MCF 10A (cell line): ENCODE measurements at regions of chr13 and their contacts with region 1.

Region 1: GRCh38 chr13:75694722-75695121 is 58.6 kb downstream of the LMO7 start:
- DNase-seq: peak; percentile 82
- H3K4me3 Mint-ChIP-seq: no peak overlapping the region
- H3K27ac Mint-ChIP-seq: peak overlapping the region; percentile 27
- H3K4me1 Mint-ChIP-seq: peaks cover 18% of the 10 kb centered on the region
- H3K27me3 Mint-ChIP-seq: no peaks in the 10 kb centered on the region
- CTCF ChIP-seq: no peak

Region 2: DNA sequence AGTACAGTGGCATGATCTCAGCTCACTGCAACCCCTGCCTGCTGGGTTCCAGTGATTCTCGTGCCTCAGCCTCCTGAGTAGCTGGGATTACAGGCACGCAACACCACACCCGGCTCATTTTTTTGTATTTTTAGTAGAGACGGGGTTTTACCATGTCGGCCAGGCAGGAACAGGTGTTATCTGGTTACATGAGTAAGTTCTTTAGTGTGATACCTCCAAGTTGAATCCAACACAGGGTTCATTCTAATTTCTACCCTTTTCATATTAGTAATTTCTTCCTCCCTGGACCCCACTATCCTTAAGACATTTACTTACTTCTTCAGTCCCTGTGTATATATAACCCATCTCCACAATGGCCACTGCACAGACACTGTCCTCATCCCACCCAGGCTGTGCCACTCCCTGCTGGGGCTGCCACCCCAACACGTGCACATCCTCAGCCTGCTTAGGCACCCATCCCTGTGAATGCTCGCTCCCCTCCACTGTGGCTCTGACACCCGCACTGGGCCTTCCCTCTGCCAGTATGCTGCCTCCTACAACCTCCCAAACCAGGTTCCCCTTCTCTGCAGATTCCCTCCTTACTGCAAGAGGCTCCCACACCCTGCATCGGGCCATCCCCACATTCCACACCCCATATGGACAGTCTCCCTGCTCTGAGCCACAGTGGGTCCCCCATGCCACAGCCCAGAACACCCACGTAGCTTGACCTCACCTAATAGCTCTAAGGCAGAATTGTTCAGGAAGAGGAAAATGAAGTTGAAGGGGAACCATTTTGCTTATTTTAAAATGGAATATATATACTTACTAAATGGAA is 359.9 kb before region 1 on chr13:
- CTCF ChIA-PET with region 1: no interaction called
- POLR2A ChIA-PET with region 1: no interaction called
- intact Hi-C with region 1: no loop called
- DNase-seq: no peak
- H3K4me3 Mint-ChIP-seq: no peak overlapping the region
- H3K27ac Mint-ChIP-seq: no peak overlapping the region
- H3K4me1 Mint-ChIP-seq: peaks cover 9% of the 10 kb centered on the region
- H3K27me3 Mint-ChIP-seq: no peaks in the 10 kb centered on the region
- CTCF ChIP-seq: no peak

Region 3: DNA sequence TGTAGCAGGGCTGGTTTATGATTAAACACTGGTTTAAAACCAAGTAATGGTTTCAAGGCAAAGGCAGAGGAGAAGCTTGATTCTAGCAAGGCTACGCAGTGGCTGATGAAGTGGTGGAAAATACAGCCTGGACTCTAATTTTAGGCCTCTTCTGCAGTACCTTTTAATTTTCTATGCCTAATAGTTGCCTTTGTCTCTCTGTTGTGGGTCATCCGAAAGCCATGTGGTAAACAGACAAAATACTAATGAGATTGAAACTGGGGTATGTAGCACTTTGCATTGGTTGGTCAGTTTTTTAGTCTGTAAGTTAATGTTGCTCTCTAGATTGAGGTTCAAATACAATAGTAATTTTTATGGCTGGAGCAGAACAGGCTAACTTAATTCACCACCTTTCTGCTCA is 55.3 kb before region 1 on chr13:
- CTCF ChIA-PET with region 1: no interaction called
- POLR2A ChIA-PET with region 1: no interaction called
- intact Hi-C with region 1: no loop called
- DNase-seq: no peak
- H3K4me3 Mint-ChIP-seq: no peak overlapping the region
- H3K27ac Mint-ChIP-seq: no peak overlapping the region
- H3K4me1 Mint-ChIP-seq: no peaks in the 10 kb centered on the region
- H3K27me3 Mint-ChIP-seq: no peaks in the 10 kb centered on the region
- CTCF ChIP-seq: no peak

Region 4: GRCh38 chr13:75715601-75716523 is 21.1 kb after region 1 on chr13:
- CTCF ChIA-PET with region 1: interaction called, 31 read pairs
- POLR2A ChIA-PET with region 1: interaction called, 16 read pairs
- intact Hi-C with region 1: no loop called
- DNase-seq: peak; percentile 71
- H3K4me3 Mint-ChIP-seq: no peak overlapping the region
- H3K27ac Mint-ChIP-seq: peak overlapping the region; percentile 91
- H3K4me1 Mint-ChIP-seq: peaks cover 9% of the 10 kb centered on the region
- H3K27me3 Mint-ChIP-seq: no peaks in the 10 kb centered on the region
- CTCF ChIP-seq: no peak

Region 5: GRCh38 chr13:75771818-75772217 is 77.1 kb after region 1 on chr13:
- CTCF ChIA-PET with region 1: interaction called, 93 read pairs
- POLR2A ChIA-PET with region 1: interaction called, 4 read pairs
- intact Hi-C with region 1: no loop called
- DNase-seq: peak; percentile 65
- H3K4me3 Mint-ChIP-seq: no peak overlapping the region
- H3K27ac Mint-ChIP-seq: peak overlapping the region; percentile 71
- H3K4me1 Mint-ChIP-seq: peaks cover 20% of the 10 kb centered on the region
- H3K27me3 Mint-ChIP-seq: no peaks in the 10 kb centered on the region
- CTCF ChIP-seq: no peak

Region 6: DNA sequence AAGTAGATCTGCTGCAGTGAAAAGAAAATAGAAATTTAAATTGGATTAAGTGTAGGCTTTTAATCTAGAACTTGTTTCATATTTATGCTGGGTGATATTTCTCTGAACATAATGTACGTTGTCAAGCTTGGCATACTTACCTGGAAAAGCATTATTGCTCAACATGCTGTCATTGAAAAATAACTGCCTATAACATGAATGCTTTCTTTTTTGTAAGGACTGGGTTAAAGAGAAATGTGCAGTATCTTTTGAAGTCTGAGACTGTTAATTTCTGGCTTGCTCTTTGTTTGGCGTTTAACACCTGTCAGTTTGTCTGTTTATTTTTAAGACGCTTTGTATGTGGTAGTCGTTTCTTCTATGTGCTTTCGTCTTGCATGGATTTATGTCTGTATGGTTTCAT is 116.6 kb after region 1 on chr13:
- CTCF ChIA-PET with region 1: interaction called, 75 read pairs
- POLR2A ChIA-PET with region 1: interaction called, 3 read pairs
- intact Hi-C with region 1: no loop called
- DNase-seq: no peak
- H3K4me3 Mint-ChIP-seq: no peak overlapping the region
- H3K27ac Mint-ChIP-seq: no peak overlapping the region
- H3K4me1 Mint-ChIP-seq: peaks cover 11% of the 10 kb centered on the region
- H3K27me3 Mint-ChIP-seq: no peaks in the 10 kb centered on the region
- CTCF ChIP-seq: no peak

Region 7: DNA sequence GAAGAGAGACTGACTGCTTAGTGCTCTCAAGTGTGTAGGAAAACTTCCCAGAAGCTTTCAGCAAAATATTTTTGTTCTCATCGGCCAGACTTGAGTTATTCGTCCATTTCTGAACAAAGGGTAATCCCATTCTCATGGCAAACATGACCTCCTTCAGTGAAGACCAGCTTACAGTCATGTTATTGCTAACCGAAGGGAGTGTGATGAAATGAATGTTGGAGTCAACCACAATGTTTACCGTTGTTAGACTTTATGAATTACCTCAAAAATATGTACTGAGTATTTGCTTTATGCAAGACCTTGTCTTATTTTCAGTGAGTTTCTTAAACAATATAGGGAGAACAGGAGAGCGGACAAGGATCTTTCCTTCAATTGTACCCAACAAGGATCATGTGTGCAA is 170.0 kb after region 1 on chr13:
- CTCF ChIA-PET with region 1: interaction called, 74 read pairs
- POLR2A ChIA-PET with region 1: interaction called, 8 read pairs
- intact Hi-C with region 1: no loop called
- DNase-seq: peak; percentile 73
- H3K4me3 Mint-ChIP-seq: no peak overlapping the region
- H3K27ac Mint-ChIP-seq: peak overlapping the region; percentile 57
- H3K4me1 Mint-ChIP-seq: peaks cover 9% of the 10 kb centered on the region
- H3K27me3 Mint-ChIP-seq: no peaks in the 10 kb centered on the region
- CTCF ChIP-seq: no peak

Region 8: DNA sequence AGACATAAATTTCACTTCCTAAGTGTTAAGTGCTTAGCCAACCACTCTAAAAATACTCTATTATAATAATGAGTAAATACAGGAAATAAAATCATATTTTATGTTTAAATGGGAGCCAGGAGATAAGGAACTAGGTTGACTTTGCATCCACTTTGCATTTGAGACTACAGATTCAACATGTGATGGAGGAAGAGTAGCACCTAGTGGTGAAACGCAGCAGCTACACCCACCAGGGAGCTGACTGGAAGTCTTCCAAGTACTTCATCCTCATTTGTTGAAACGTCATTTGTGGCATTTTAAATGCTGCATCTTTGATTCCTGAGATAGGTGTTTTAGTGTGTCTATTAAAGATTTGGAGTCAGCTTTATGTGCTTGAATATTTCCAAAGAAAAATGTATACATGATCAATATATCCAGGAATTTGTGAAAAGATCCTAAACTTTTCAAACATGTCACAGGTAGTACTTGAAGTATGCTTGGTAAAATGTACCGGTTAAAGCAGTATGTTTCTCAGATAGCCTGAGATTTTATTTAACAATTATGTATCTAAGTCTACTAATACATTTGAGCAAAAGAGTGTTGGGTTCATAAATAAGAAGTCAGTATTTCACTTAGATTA is 1208.9 kb after region 1 on chr13:
- CTCF ChIA-PET with region 1: interaction called, 7 read pairs
- POLR2A ChIA-PET with region 1: no interaction called
- intact Hi-C with region 1: loop called (anchors 2 kb)
- DNase-seq: peak; percentile 79
- H3K4me3 Mint-ChIP-seq: no peak overlapping the region
- H3K27ac Mint-ChIP-seq: no peak overlapping the region
- H3K4me1 Mint-ChIP-seq: peaks cover 9% of the 10 kb centered on the region
- H3K27me3 Mint-ChIP-seq: no peaks in the 10 kb centered on the region
- CTCF ChIP-seq: peak; percentile 98